ENCODE measurements at regions of chr13 and their contacts with region 1.

Region 1: DNA sequence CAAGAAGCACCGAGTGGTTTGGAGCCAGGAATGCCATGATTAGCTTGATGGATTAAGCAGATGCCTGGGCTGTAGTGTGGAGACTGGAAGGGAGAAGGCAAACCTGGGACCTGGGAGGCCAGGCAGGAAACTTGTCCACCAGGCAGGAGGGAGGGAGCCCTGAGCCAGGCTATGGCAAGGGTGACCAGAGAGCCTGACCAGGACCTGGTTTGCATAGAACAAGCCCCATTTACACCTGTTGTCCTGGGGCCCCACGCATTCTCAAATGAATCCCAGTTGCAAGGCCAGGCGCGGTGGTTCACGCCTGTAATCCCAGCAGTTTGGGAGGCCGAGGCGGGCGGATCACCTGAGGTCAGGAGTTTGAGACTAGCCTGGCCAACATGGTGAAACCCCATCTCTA is 50.2 kb upstream of the LATS2 start:
- DNase-seq: no peak
- ATAC-seq: no peak
- H3K4me3 ChIP-seq: no peak overlapping the region
- H3K4me3 Mint-ChIP-seq: no peak overlapping the region
- H3K27ac ChIP-seq: no peak overlapping the region
- H3K27ac Mint-ChIP-seq: no peak overlapping the region
- H3K4me1 ChIP-seq: no peaks in the 10 kb centered on the region
- H3K4me1 Mint-ChIP-seq: no peaks in the 10 kb centered on the region
- H3K27me3 ChIP-seq: no peaks in the 10 kb centered on the region
- H3K27me3 Mint-ChIP-seq: no peaks in the 10 kb centered on the region
- CTCF ChIP-seq: no peak

Region 2: DNA sequence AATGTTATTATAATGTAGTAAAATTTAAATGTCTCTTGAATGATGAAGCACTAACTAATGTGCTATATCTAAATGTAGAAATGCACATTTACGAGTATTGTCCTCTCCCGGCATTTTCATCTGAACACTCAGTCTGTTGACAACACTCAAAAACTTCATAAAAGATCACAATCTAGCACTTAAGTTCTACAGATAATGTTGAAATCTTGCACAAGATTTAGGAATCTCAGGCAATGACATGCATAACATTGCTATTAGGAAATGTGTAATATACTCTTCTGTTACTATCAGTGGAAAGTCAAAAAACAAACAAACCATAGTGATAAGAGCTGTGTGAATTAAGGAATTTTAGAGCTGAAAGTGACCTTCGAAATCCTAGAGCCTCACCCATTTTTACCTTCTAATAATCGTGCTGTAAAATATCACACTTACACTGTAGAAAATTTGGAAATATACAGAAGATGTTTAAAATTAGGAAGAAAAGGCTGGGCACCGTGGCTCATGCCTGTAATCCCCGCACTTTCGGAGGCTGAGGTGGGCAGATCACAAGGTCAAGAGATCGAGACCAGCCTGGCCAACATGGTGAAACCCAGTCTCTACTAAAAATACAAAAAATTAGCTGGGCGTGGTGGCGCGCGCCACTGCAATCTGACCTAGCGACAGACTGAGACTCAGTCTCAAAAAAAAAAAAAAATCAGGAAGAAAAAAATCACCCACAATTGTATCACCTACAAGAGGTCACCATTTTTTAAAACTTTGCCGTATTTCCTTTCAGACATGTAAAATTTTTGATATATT is 171.3 kb before region 1 on chr13:
- intact Hi-C with region 1: no loop called
- DNase-seq: no peak
- ATAC-seq: no peak
- H3K4me3 ChIP-seq: no peak overlapping the region
- H3K4me3 Mint-ChIP-seq: no peak overlapping the region
- H3K27ac ChIP-seq: no peak overlapping the region
- H3K27ac Mint-ChIP-seq: no peak overlapping the region
- H3K4me1 ChIP-seq: no peaks in the 10 kb centered on the region
- H3K4me1 Mint-ChIP-seq: peaks cover 5% of the 10 kb centered on the region in 2 donors
- H3K27me3 ChIP-seq: no peaks in the 10 kb centered on the region
- H3K27me3 Mint-ChIP-seq: peaks cover 18 to 19% of the 10 kb centered on the region in 2 donors
- CTCF ChIP-seq: no peak

Region 3: GRCh38 chr13:21181671-21182070 is 70.1 kb after region 1 on chr13:
- intact Hi-C with region 1: loop called (anchors 2 kb)
- DNase-seq: no peak
- ATAC-seq: no peak
- H3K4me3 ChIP-seq: no peak overlapping the region
- H3K4me3 Mint-ChIP-seq: no peak overlapping the region
- H3K27ac ChIP-seq: no peak overlapping the region
- H3K27ac Mint-ChIP-seq: no peak overlapping the region
- H3K4me1 ChIP-seq: peaks cover 8% of the 10 kb centered on the region
- H3K4me1 Mint-ChIP-seq: peaks cover 11 to 12% of the 10 kb centered on the region in 2 donors
- H3K27me3 ChIP-seq: no peaks in the 10 kb centered on the region
- H3K27me3 Mint-ChIP-seq: no peaks in the 10 kb centered on the region
- CTCF ChIP-seq: no peak

Region 4: DNA sequence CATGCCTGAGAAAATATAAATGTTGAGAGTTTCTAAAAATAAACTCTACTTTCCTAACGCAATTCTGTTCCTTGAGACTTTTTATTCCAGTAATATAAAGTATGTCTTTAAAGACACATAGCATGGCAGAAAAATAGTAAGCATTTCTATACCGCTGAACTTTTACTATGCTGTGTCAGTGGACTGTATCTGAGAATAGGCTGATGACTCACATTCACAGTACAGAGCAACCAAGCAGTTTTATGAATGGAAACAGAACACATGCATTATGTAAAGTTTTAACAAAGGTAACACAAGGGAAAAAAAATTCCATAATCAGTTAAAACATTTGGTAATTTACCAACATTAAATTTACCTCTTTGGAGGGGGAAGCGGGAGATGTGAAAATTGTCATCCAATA is 309.2 kb after region 1 on chr13:
- intact Hi-C with region 1: no loop called
- DNase-seq: no peak
- ATAC-seq: no peak
- H3K4me3 ChIP-seq: no peak overlapping the region
- H3K4me3 Mint-ChIP-seq: no peak overlapping the region
- H3K27ac ChIP-seq: no peak overlapping the region
- H3K27ac Mint-ChIP-seq: peak overlapping the region; percentile 2 to 8
- H3K4me1 ChIP-seq: no peaks in the 10 kb centered on the region
- H3K4me1 Mint-ChIP-seq: peaks cover 19 to 21% of the 10 kb centered on the region in 2 donors
- H3K27me3 ChIP-seq: no peaks in the 10 kb centered on the region
- H3K27me3 Mint-ChIP-seq: no peaks in the 10 kb centered on the region
- CTCF ChIP-seq: no peak